ENCODE measurements at regions of chr10 and their contacts with region 1.

Region 1: GRCh38 chr10:25026463-25026862 is 10.1 kb downstream of the THNSL1 start:
- DNase-seq: no peak

Region 2: DNA sequence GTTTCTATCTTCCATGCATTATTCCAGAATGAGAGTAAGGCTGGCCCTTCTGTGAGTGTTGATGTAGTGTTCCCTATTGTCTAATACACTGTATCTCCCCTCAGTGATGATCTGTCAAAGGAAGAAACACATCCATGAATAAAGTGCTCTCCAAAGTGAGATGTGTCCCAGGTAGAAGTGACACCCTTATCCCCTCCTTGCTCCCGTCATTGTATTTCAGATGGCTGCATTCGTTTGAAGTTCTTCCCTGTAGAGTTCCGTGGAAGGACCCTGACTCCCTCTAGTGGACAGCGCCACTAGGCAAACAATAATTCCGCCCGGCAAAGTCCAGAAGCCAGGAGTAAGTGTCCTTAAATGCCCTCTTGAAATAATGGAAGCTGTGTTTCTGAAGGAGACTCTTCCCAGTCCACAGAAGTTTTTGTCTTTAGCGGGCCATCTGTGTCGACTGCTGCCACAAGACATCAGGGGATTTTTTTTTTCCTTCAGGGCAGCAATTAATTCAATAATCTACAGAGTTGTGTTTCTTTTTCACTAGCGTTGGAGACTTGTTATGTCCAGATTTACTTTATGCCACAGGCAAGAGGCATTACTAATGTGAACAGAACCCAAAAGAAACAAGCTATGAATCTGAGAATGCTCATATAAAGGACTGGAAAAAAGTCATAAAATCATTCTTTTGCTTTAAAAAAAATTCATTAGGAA is 54.6 kb after region 1 on chr10:
- intact Hi-C with region 1: loop called (anchors 2 kb)
- DNase-seq: peak; percentile 89

Region 3: GRCh38 chr10:25113191-25114035 is 87.0 kb after region 1 on chr10:
- intact Hi-C with region 1: no loop called
- DNase-seq: peak; percentile 80

Region 4: DNA sequence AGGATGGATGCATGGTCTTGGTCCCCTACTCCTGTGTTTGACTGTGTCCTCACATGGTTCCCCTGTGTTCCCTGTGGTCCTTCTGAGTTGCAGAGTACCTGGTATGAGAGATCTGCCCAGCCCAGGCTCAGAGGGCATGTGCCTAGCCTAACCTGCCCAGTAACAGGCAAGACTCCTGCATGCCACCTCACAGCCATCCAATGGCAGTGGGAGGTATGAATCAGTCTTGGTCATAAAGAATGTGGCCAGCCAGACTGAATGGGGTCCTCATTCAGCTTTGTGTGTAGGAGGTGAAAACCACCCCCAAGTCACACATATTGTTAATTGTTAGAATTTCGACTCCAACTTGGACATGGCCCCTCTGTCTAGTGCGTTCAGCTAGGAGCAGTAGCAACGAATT is 131.2 kb after region 1 on chr10:
- intact Hi-C with region 1: no loop called
- DNase-seq: no peak